Heart right ventricle (tissue), 16 donors: ENCODE measurements at regions of chr6 and their contacts with region 1.

Region 1: GRCh38 chr6:157693867-157694266 is 129.2 kb upstream of the SNX9 start:
- DNase-seq: peak; percentile 69 to 72
- ATAC-seq: peak; percentile 80 to 96 (median 88)
- H3K4me3 ChIP-seq: no peak overlapping the region
- H3K27ac ChIP-seq: peak overlapping the region in 7 of 10 donors; percentile 22 to 81 (median 62)
- H3K4me1 ChIP-seq: peaks cover 0 to 33% (median 16%) of the 10 kb centered on the region in 9 donors
- H3K27me3 ChIP-seq: no peaks in the 10 kb centered on the region
- CTCF ChIP-seq: no peak

Region 2: DNA sequence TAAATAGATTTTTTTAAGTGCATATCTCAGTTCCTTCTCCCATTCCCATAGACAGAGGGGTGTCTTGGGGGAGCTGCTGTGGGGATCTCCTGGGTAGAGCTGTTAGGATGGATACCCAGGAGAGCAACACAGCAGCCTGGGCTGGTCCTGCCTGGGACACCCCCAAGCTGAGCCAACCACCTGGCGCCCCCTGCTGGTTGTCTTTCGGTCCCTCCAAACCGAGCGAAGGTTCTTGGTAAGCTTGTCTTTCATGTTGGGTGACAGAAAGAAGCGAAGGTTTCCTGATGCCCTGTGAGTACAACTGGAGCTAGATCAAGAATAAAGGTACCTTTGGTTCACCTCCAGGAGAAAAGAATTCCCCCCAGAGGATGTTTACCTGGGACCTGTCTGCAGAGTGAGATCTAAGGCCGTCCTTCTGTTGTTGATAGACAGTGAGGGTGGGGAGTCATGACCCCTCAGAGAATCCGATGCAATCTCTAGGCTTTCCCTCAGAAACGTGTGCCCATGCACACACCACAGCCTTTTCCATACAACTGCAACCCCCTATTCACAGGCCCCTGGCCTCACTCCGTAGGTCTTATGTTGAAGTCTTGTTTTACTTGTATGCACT is 180.0 kb after region 1 on chr6:
- intact Hi-C with region 1: loop called in 1 of 10 experiments (anchors 10 kb)
- DNase-seq: peak; percentile 66 to 82
- ATAC-seq: peak; percentile 62 to 83 (median 72)
- H3K4me3 ChIP-seq: no peak overlapping the region
- H3K27ac ChIP-seq: no peak overlapping the region
- H3K4me1 ChIP-seq: peaks cover 0 to 6% (median 0%) of the 10 kb centered on the region in 9 donors
- H3K27me3 ChIP-seq: no peaks in the 10 kb centered on the region
- CTCF ChIP-seq: peak; percentile 64 to 87 (median 79)